Sigmoid colon (tissue), 7 donors: ENCODE measurements at regions of chr12 and their contacts with region 1.

Region 1: DNA sequence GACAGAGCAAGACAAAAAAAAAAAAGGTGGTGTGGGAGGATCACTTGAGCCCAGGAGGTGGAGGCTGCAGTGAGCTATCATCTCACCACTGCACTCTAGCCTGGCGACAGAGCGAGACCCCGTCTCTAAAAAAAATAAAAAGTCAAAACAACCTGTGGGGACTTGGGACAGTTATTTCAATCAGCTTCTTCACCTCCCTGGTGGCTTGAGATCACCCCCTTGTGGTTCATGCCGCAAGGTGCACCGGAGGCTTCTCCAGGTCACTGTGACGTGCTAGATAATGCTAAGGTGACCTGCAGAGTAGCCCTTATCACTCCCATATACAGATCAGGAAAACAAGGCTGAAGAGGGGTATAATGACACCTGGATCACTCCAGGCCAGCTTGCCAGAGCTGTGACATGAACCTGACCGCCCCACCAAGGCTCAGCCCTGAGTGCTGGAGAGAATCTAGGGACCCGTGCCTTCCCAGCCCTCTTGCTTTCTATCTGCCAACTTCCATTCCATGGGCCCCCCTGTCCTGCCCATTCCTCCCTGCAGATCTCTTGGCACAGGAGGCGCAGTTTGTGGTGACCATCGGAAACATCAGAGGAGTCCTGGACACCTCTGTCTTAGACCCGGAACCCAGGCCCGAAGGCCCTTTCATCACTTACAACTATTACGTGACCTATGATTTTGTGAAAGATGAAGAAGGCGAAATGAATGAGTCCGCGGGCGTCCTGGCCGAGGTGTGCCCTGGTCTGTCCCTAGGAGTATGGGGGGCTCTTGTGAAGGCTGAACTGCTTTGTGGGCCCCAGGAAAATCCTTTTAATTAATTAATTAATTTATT is 8.1 kb downstream of the LRRC43 start:
- DNase-seq: no peak
- H3K4me3 ChIP-seq: no peak overlapping the region
- H3K27ac ChIP-seq: no peak overlapping the region
- H3K4me1 ChIP-seq: no peaks in the 10 kb centered on the region
- H3K27me3 ChIP-seq: no peaks in the 10 kb centered on the region
- CTCF ChIP-seq: peak; percentile 25 to 61 (median 60)
- EP300 ChIP-seq: no peak
- POLR2A ChIP-seq: no peak

Region 2: GRCh38 chr12:121917979-121918678 is 272.9 kb before region 1 on chr12 and contains the start of gene CFAP251:
- intact Hi-C with region 1: loop called (anchors 2 kb)
- DNase-seq: peak; percentile 97
- H3K4me3 ChIP-seq: peak within 1 kb of the TSS; percentile 31 to 53 (median 44)
- H3K27ac ChIP-seq: peak within 1 kb of the TSS in 3 of 4 donors; percentile 38 to 52 (median 44)
- H3K4me1 ChIP-seq: peaks cover 0 to 8% (median 0%) of the 10 kb centered on the region in 4 donors
- H3K27me3 ChIP-seq: no peaks in the 10 kb centered on the region
- CTCF ChIP-seq: peak; percentile 53 to 78 (median 62)
- EP300 ChIP-seq: no peak
- POLR2A ChIP-seq: no peak
- total RNA-seq, gene CFAP251: 0.68 to 3.0 (median 1.2) TPM

Region 3: GRCh38 chr12:122297494-122297893 is 106.4 kb after region 1 on chr12:
- intact Hi-C with region 1: no loop called
- DNase-seq: no peak
- H3K4me3 ChIP-seq: no peak overlapping the region
- H3K27ac ChIP-seq: no peak overlapping the region
- H3K4me1 ChIP-seq: no peaks in the 10 kb centered on the region
- H3K27me3 ChIP-seq: no peaks in the 10 kb centered on the region
- CTCF ChIP-seq: no peak
- EP300 ChIP-seq: no peak
- POLR2A ChIP-seq: no peak